ENCODE measurements at regions of chr2 and their contacts with region 1.

Region 1: GRCh38 chr2:155043677-155044076 is 345.2 kb downstream of the KCNJ3 start:
- DNase-seq: no peak
- CTCF ChIP-seq: no peak

Region 2: GRCh38 chr2:155054712-155055111 is 11.0 kb after region 1 on chr2:
- CTCF ChIA-PET with region 1: interaction called, 10 read pairs
- POLR2A ChIA-PET with region 1: no interaction called
- DNase-seq: no peak
- CTCF ChIP-seq: no peak